T-cell (primary cell): ENCODE measurements at regions of chr6 and their contacts with region 1.

Region 1: DNA sequence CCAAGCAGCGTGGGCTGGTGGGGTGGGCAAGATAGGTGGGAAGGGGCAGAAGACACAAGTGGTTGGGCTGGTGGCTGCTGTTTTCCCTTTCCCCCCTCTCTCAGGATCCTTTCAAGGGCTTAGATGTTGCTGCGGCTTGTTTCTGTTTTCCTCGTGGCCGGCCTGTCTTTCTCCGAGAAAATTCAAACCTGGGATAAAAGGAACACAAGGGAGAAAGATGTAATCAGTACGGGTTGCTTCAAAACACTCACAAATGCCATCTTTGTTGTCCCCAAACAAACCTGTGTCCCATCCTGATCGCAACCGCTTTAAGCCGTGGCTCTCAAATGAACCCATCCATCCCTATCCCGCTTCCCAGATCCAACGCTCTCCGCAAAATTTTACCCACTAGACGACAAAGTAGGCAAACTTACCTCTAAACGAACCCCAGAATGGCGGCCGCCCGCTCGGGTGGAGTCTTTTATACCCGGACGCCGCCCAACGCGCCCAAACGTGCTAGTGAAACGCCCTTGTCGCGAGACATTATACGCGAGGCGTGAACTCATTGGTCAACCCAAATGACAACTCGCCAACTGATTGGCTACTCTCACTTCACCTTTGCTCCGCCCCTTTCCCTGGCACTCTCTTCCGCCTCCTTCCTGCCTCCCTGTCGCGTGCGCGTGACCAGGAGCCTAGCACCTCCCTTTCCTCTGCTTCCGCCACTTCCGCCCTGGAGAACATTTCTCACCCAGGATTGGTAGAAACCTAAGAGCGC is at the start of gene PPP1R10:
- DNase-seq: peak; percentile 94 to 100 (median 98)
- ATAC-seq: peak; percentile 78 to 81 (median 78)
- H3K4me3 ChIP-seq: peak within 1 kb of the TSS; percentile 88 to 100
- H3K4me3 Mint-ChIP-seq: peak within 1 kb of the TSS; percentile 93 to 100 (median 98)
- H3K27ac ChIP-seq: peak within 1 kb of the TSS; percentile 100
- H3K27ac Mint-ChIP-seq: peak within 1 kb of the TSS; percentile 100
- H3K4me1 ChIP-seq: peaks cover 29 to 33% of the 10 kb centered on the region in 2 experiments
- H3K4me1 Mint-ChIP-seq: peaks cover 42 to 49% (median 43%) of the 10 kb centered on the region in 3 donors
- H3K27me3 ChIP-seq: no peaks in the 10 kb centered on the region
- H3K27me3 Mint-ChIP-seq: peaks cover 0 to 2% of the 10 kb centered on the region in 2 donors
- total RNA-seq, gene PPP1R10: 104 to 170 (median 163) TPM

Region 2: GRCh38 chr6:30453508-30454116 is 163.4 kb before region 1 on chr6:
- CTCF ChIA-PET with region 1: no interaction called
- POLR2A ChIA-PET with region 1: interaction called in 1 of 2 experiments, 11 read pairs
- DNase-seq: peak; percentile 54 to 91 (median 80)
- ATAC-seq: peak; percentile 64 to 77 (median 72)
- H3K4me3 ChIP-seq: peak overlapping the region; percentile 23 to 38
- H3K4me3 Mint-ChIP-seq: peak overlapping the region; percentile 37 to 59 (median 55)
- H3K27ac ChIP-seq: no peak overlapping the region
- H3K27ac Mint-ChIP-seq: no peak overlapping the region
- H3K4me1 ChIP-seq: peaks cover 24 to 47% of the 10 kb centered on the region in 2 experiments
- H3K4me1 Mint-ChIP-seq: peaks cover 43 to 52% (median 49%) of the 10 kb centered on the region in 3 donors
- H3K27me3 ChIP-seq: peaks cover 22 to 73% of the 10 kb centered on the region in 2 experiments
- H3K27me3 Mint-ChIP-seq: peaks cover 69 to 82% of the 10 kb centered on the region in 2 donors

Region 3: DNA sequence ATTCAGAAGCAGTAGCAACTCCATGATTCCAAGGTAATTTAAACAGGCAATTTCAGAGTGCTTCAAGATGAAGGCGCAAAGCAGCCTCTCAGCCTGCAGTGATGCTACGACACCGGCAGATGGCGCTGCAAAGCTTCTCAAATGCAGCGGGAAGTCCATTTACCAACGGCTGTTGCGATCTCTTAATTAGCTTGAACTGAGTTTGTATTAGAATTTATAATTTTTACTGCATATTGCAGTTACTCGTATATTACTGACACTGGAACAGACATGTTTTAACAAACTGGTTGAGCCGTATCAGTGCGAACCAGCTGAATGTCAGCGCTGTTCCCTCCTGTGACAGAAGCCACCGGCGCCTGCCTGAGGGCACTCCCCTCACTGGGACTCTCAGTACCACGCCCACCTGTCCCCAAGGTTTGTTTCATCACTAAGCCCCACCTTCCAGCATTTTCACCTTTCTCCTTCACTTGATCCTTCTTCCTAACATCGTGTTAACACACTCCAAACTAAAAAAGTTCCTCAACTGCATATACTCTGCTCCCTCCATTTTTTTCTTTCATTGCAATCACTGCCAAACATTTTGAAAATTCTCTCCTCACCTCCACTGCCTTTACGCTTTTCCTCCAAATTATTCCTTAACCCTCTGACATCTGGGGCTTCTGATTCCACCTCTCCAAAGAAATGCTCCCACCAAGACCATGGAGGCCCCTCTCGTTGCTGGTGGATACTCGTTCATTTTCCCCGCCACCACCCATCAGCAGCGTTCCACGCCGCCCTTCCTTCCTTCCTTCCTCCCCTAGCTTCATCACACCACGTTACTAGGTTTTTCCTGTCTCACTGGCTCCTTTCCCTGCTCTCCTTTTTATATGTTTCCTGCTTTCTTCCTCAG is 75.2 kb before region 1 on chr6:
- CTCF ChIA-PET with region 1: interaction called in 1 of 2 experiments, 23 read pairs
- POLR2A ChIA-PET with region 1: interaction called, 7 to 30 read pairs
- DNase-seq: peak; percentile 54 to 94 (median 74)
- ATAC-seq: peak; percentile 68 to 80 (median 76)
- H3K4me3 ChIP-seq: peak overlapping the region; percentile 46 to 74
- H3K4me3 Mint-ChIP-seq: peak overlapping the region; percentile 78 to 81 (median 81)
- H3K27ac ChIP-seq: peak overlapping the region; percentile 74
- H3K27ac Mint-ChIP-seq: peak overlapping the region; percentile 91 to 95
- H3K4me1 ChIP-seq: peaks cover 26 to 31% of the 10 kb centered on the region in 2 experiments
- H3K4me1 Mint-ChIP-seq: peaks cover 34 to 37% (median 35%) of the 10 kb centered on the region in 3 donors
- H3K27me3 ChIP-seq: no peaks in the 10 kb centered on the region
- H3K27me3 Mint-ChIP-seq: no peaks in the 10 kb centered on the region

Region 4: GRCh38 chr6:30590994-30591393 is 26.0 kb before region 1 on chr6:
- CTCF ChIA-PET with region 1: interaction called in 1 of 2 experiments, 10 read pairs
- POLR2A ChIA-PET with region 1: interaction called, 11 to 13 read pairs
- DNase-seq: no peak
- ATAC-seq: peak in 1 of 4 experiments; percentile 24
- H3K4me3 ChIP-seq: no peak overlapping the region
- H3K4me3 Mint-ChIP-seq: no peak overlapping the region
- H3K27ac ChIP-seq: no peak overlapping the region
- H3K27ac Mint-ChIP-seq: peak overlapping the region in 1 of 2 donors; percentile 34
- H3K4me1 ChIP-seq: no peaks in the 10 kb centered on the region
- H3K4me1 Mint-ChIP-seq: peaks cover 3 to 8% (median 8%) of the 10 kb centered on the region in 3 donors
- H3K27me3 ChIP-seq: no peaks in the 10 kb centered on the region
- H3K27me3 Mint-ChIP-seq: no peaks in the 10 kb centered on the region

Region 5: DNA sequence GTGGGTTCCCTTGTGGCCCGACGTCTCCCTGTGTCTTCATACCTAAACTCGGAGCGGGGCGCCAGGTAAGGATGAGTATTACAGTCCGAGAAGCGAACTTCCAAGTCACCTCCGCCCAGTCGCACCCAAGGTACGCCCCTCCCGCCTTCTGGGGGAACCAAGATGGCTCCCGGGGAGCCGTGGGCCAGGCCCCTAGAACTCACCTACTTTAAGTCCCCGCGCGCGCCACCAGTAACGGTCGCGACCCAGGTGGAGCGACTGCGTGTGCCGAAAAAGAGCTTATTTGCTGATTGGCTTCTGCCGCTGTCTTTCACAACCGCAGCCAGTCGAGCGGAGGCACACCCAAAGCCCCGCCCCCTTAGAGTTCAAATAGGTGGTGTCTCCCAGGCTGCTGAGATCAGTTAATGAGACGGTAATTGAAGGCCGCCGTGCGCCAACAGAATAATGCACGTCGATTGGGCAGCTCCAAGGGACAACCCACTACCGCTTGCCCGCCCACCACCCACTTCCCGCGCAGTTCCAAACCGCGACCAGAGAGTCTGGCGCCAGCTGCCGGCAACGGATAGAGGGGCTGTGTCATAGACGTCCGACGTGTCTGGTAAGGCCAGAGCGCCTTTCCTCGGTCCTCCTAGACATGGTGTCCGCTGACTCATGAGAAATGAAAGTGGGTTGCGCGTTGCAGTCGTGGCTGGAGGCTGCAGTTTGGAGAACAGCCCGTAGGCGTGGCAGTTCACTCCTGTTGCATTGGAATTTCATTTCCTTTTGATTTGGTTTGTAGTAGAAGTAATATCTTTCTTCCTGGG is 100.3 kb after region 1 on chr6 and contains the start of gene MDC1:
- CTCF ChIA-PET with region 1: interaction called in 1 of 2 experiments, 10 read pairs
- POLR2A ChIA-PET with region 1: interaction called in 1 of 2 experiments, 14 read pairs
- DNase-seq: peak; percentile 92 to 100 (median 99)
- ATAC-seq: peak; percentile 75 to 78 (median 77)
- H3K4me3 ChIP-seq: peak within 1 kb of the TSS; percentile 69 to 71
- H3K4me3 Mint-ChIP-seq: peak within 1 kb of the TSS; percentile 95 to 98 (median 97)
- H3K27ac ChIP-seq: peak within 1 kb of the TSS; percentile 93
- H3K27ac Mint-ChIP-seq: peak within 1 kb of the TSS; percentile 99
- H3K4me1 ChIP-seq: peaks cover 17 to 38% of the 10 kb centered on the region in 2 experiments
- H3K4me1 Mint-ChIP-seq: peaks cover 51 to 63% (median 53%) of the 10 kb centered on the region in 3 donors
- H3K27me3 ChIP-seq: no peaks in the 10 kb centered on the region
- H3K27me3 Mint-ChIP-seq: no peaks in the 10 kb centered on the region
- total RNA-seq, gene MDC1: 42.3 to 69.7 (median 53.4) TPM